Activated CD4-positive, alpha-beta T cell treated with anti-CD3 and anti-CD28 coated beads for 36 hours (primary cell): ENCODE measurements at regions of chr14 and their contacts with region 1.

Region 1: GRCh38 chr14:20970983-20971704 is 15.9 kb downstream of the RNASE2 start:
- DNase-seq: peak; percentile 90
- ATAC-seq: peak; percentile 89
- H3K4me3 Mint-ChIP-seq: peak overlapping the region; percentile 76
- H3K27ac Mint-ChIP-seq: peak overlapping the region; percentile 73
- H3K4me1 Mint-ChIP-seq: peaks cover 7% of the 10 kb centered on the region
- H3K27me3 Mint-ChIP-seq: peaks cover 29% of the 10 kb centered on the region

Region 2: GRCh38 chr14:20697273-20698017 is 273.7 kb before region 1 on chr14:
- CTCF ChIA-PET with region 1: interaction called, 11 read pairs
- POLR2A ChIA-PET with region 1: no interaction called
- intact Hi-C with region 1: loop called (anchors 1 kb)
- DNase-seq: peak; percentile 78
- ATAC-seq: peak; percentile 95
- H3K4me3 Mint-ChIP-seq: no peak overlapping the region
- H3K27ac Mint-ChIP-seq: no peak overlapping the region
- H3K4me1 Mint-ChIP-seq: peaks cover under 1% of the 10 kb centered on the region
- H3K27me3 Mint-ChIP-seq: no peaks in the 10 kb centered on the region

Region 3: DNA sequence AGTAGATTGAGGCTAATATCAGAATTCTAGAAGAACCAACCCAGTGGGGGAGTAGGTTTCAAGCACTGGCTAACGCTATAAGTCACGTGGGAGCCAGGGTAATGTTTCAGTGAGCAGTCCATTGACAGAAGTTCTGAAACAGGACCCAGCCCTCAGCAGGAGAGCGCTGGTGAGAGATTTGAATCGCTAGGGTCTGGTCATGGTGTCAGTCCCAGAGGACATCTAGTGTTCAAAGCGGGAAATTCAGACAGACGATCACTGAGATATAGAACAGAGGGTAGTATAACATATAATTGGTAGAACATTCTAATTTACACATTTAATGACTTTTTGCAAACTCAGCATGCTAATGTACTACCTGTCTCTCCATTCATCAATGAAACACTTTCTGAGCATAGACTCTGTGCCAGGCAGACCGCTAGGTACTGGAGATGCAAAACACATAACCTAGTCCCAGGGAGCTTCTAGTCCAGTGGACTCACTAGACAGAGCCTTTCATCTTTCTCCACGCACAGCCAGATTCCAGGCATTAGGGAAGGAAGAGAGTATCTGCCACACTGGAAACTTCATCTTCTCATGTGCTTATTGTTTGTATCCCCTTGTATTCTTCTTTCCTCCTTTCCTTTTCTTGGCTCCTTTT is 115.4 kb before region 1 on chr14:
- CTCF ChIA-PET with region 1: interaction called, 70 read pairs
- POLR2A ChIA-PET with region 1: interaction called, 5 read pairs
- intact Hi-C with region 1: loop called (anchors 1 kb)
- DNase-seq: peak; percentile 65
- ATAC-seq: peak; percentile 92
- H3K4me3 Mint-ChIP-seq: no peak overlapping the region
- H3K27ac Mint-ChIP-seq: no peak overlapping the region
- H3K4me1 Mint-ChIP-seq: no peaks in the 10 kb centered on the region
- H3K27me3 Mint-ChIP-seq: peaks cover 8% of the 10 kb centered on the region

Region 4: DNA sequence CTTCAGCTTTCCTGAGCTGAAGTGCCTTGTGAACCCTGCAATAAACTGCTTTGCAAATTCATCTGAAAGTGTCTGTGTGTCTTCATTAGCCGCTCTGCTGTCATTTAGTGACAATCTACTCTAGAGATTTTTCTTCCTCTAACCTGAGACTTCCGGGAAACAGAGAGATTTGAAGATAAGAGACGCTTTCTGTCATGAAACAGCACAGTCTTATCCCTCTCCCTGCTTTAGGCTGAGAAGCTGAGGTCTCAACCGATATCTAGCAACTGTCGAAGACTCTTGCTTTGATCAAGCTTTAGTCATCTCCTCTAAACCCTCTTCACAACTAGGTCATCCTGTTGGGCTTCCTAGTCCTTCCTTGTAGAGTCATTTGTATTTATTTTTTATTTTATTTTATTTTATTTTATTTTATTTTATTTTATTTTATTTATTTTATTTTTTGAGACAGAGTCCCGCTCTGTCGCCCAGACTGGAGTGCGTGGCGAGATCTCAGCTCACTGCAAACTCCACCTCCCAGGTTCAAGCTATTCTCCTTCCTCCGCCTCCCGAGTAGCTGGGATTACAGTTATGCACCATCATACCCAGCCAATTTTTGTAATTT is 14.7 kb before region 1 on chr14:
- CTCF ChIA-PET with region 1: interaction called, 73 read pairs
- POLR2A ChIA-PET with region 1: no interaction called
- intact Hi-C with region 1: loop called in 1 of 2 experiments (anchors 1 kb)
- DNase-seq: no peak
- ATAC-seq: no peak
- H3K4me3 Mint-ChIP-seq: no peak overlapping the region
- H3K27ac Mint-ChIP-seq: no peak overlapping the region
- H3K4me1 Mint-ChIP-seq: peaks cover 27% of the 10 kb centered on the region
- H3K27me3 Mint-ChIP-seq: peaks cover 8% of the 10 kb centered on the region

Region 5: DNA sequence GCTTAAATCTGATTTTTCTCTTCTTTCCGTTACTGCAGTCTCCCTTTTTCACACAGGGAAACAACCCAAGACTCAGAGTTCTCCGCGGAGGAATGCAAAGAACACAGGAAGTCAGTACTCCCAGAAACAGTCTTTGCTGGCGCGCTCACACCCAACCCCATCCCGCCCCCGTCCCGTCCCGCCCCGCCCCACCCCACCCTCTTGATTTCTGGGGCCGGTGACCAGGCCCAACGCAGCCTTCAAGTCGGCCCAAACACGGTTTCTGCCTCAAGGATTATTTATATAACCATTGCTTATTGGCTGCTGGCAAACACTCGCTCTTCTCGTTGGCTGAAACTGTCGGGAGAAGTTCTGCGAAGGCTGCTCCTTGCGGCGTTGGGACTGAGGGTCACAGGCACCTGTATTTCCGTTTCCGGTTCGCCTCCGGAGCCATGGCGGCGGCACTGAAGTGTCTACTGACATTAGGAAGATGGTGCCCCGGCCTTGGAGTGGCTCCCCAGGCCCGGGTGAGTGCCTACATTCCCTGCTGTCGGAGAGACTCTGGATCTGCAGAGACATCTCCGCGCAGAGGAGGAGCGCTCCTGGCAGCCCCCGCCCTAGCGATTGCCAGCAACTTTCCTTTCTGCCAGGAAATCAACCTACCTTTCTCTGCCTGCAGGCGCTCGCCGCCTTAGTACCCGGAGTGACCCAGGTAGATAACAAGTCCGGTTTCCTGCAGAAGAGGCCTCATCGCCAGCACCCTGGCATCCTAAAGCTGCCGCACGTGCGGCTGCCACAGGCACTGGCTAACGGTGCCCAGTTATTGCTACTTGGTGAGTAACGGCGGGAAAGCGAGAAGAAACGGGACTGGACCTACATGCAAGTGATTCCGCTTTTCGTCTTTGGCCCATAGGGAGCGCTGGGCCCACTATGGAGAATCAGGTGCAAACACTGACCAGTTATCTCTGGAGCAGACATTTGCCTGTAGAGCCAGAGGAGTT is 18.7 kb after region 1 on chr14 and contains the start of gene METTL17:
- CTCF ChIA-PET with region 1: interaction called, 11 read pairs
- POLR2A ChIA-PET with region 1: no interaction called
- intact Hi-C with region 1: loop called in 1 of 2 experiments (anchors 1 kb)
- DNase-seq: peak; percentile 93
- ATAC-seq: peak; percentile 97
- H3K4me3 Mint-ChIP-seq: peak within 1 kb of the TSS; percentile 92
- H3K27ac Mint-ChIP-seq: peak within 1 kb of the TSS; percentile 89
- H3K4me1 Mint-ChIP-seq: peaks cover 37% of the 10 kb centered on the region
- H3K27me3 Mint-ChIP-seq: no peaks in the 10 kb centered on the region
- total RNA-seq, gene METTL17: 89.3 to 90.0 TPM

Region 6: DNA sequence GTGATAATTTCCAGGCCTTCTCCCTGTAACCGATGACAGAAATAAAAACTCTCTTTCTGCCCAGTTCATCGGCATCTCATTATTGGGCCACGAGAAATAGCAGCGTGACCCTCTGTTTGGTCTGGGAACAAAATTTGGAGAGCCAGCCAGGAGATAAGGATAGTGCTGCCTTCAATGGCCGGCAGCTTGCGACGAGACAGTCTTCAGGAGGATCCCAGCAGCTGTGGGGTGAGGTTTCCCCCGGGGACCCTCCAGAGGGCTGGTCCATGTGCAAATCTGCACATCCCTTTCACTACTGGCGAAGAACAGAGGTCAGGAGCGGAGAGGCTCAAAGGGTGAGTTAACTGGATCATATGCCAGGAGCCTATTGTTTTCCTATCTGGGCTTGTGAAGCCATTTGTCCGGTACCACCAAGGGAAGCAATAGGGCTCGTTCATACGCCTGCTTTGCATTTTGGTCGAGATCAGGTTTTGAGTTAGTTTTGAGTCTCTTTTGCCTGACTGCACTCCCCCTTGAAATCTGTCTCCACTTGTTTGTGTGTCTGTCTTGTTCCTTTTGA is 32.7 kb after region 1 on chr14:
- CTCF ChIA-PET with region 1: interaction called, 10 read pairs
- POLR2A ChIA-PET with region 1: no interaction called
- intact Hi-C with region 1: loop called in 1 of 2 experiments (anchors 2 kb)
- DNase-seq: no peak
- ATAC-seq: no peak
- H3K4me3 Mint-ChIP-seq: no peak overlapping the region
- H3K27ac Mint-ChIP-seq: no peak overlapping the region
- H3K4me1 Mint-ChIP-seq: no peaks in the 10 kb centered on the region
- H3K27me3 Mint-ChIP-seq: no peaks in the 10 kb centered on the region

Region 7: DNA sequence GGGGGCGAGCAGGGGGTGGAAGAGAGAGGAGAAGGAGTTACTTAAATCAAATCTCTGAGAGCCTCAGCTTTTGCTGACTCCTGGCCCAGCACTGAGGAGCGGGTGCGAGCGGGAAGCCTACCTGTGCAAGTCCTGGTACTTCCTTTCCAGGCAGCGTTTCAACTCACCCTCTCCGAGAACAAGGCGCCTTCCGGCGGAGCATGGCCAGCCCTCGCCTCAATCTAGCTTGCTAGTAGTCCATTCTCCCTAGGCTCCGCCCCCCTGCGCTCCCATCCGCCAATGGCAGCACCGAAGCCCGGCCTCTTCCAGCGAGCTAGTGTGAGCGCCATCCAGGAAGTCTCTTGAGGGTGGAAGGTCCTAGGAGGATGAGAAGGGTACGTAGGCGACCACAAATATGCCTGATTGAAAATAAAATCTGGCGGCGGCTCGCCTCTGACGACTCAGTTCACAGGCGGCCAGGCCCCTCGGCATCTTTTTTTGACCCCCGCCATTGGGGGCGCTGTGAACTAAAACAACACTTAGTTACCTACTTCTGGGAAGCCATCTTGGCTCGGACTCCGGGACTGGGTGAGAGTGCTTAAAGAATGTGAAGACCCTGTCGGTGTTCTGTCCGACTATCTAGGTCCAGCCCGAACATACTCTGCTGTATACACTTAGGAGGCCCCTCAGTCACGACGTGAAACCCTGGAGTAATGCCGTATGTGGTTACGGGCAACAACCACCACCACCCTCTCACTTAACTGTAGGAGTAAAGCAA is 484.9 kb after region 1 on chr14 and contains the start of gene CHD8:
- CTCF ChIA-PET with region 1: no interaction called
- POLR2A ChIA-PET with region 1: no interaction called
- intact Hi-C with region 1: no loop called
- DNase-seq: peak; percentile 100
- ATAC-seq: peak; percentile 99
- H3K4me3 Mint-ChIP-seq: peak within 1 kb of the TSS; percentile 97
- H3K27ac Mint-ChIP-seq: peak within 1 kb of the TSS; percentile 99
- H3K4me1 Mint-ChIP-seq: peaks cover 30% of the 10 kb centered on the region
- H3K27me3 Mint-ChIP-seq: no peaks in the 10 kb centered on the region
- total RNA-seq, gene CHD8: 84.3 to 104 TPM